Lower leg skin (tissue), 4 donors: ENCODE measurements at regions of chr5 and their contacts with region 1.

Region 1: DNA sequence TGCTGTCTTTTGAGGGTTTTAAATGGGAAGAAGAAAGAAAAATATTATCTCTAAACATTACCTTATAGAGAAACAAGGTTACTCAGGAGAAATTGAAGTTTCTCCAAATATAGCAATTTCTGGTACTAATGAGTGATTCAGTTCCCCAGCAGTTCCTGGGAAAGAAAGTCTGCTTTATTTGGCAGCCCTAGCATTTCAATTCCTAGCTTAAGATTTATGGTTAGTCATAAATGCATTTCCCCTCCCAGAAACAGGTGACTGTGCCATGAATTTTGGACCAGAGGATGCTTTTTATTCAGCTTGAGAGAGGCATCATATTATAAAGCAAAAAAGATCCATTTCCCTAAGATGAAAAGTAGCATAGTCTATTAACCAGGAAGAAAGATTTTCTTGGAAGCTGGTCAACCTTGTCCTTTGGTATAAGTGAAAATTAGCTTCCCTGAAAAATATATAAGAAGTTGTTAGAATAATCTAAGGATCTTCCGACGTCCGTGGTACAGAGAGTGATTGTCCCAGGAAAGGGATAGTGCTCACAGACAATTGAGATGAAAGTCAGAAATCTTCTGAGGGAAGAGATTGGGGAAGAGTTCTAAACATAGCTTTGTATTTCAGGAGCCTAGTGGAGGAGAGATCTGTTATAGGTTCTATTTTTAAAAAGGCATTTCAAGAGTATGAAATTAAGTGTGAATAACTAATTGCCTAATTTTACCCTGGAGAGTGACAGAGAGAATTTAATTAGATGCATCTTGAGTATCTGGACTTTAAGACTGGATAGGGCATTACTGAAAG is 164.9 kb downstream of the ESM1 start:
- DNase-seq: no peak
- H3K4me3 ChIP-seq: no peak overlapping the region
- CTCF ChIP-seq: no peak
- POLR2A ChIP-seq: no peak

Region 2: GRCh38 chr5:54774281-54775170 is 46.0 kb before region 1 on chr5:
- intact Hi-C with region 1: loop called (anchors 5 kb)
- DNase-seq: peak; percentile 80 to 93
- H3K4me3 ChIP-seq: no peak overlapping the region
- CTCF ChIP-seq: no peak
- POLR2A ChIP-seq: no peak

Region 3: DNA sequence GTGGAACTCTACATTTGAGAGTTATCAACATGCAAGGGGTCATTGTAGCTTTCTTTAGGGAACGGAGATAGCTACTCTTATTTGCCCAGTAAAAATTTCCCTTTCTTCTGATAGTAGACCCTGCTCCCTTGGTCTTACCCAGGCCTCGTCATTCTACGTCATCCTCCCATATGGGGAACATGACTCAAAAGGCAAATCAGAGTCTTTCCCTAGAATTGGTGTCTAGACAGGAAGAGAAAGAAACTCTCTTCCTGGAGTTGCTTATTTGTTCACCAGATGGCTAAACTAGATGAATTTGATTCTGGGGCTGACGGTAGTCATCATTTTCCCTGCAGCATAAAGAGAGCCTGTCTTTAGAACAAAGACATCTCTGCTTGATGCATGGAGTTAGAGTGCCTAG is 903.7 kb after region 1 on chr5:
- intact Hi-C with region 1: no loop called
- DNase-seq: no peak
- H3K4me3 ChIP-seq: no peak overlapping the region
- CTCF ChIP-seq: no peak
- POLR2A ChIP-seq: no peak